Endothelial cell of umbilical vein (primary cell): ENCODE measurements at regions of chr17 and their contacts with region 1.

Region 1: DNA sequence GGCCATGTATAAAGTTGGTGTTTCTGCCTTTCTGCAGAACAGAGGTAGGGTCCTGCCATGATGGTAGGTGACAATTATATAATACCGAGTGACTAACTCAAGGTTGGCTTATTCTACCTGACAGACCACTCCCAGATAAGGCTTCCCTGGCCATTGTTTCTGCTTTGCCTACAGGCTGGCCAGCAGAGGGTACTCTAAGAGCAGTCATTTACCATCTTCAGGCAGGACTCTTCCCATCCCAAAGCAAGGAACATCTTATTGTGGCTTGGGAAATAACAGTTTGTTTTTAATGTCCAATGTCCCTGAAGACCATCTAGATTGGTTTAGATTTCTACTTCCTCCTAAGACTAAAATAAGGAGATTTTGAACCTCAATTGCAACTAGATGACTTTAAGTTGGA is 74.1 kb downstream of the SNX11 start:
- DNase-seq: peak; percentile 31
- H3K4me3 ChIP-seq: no peak overlapping the region
- H3K27ac ChIP-seq: no peak overlapping the region
- H3K4me1 ChIP-seq: no peaks in the 10 kb centered on the region
- H3K27me3 ChIP-seq: peaks cover 9 to 23% of the 10 kb centered on the region in 2 experiments
- CTCF ChIP-seq: peak; percentile 37 to 52
- POLR2A ChIP-seq: no peak

Region 2: GRCh38 chr17:48194097-48194550 is 12.5 kb after region 1 on chr17:
- CTCF ChIA-PET with region 1: interaction called, 11 read pairs
- POLR2A ChIA-PET with region 1: no interaction called
- dilution Hi-C with region 1: no loop called
- intact Hi-C with region 1: no loop called
- DNase-seq: peak; percentile 51
- H3K4me3 ChIP-seq: no peak overlapping the region
- H3K27ac ChIP-seq: peak overlapping the region; percentile 26
- H3K4me1 ChIP-seq: peaks cover 7% of the 10 kb centered on the region
- H3K27me3 ChIP-seq: peaks cover 0 to under 1% of the 10 kb centered on the region in 2 experiments
- CTCF ChIP-seq: no peak
- POLR2A ChIP-seq: no peak

Region 3: DNA sequence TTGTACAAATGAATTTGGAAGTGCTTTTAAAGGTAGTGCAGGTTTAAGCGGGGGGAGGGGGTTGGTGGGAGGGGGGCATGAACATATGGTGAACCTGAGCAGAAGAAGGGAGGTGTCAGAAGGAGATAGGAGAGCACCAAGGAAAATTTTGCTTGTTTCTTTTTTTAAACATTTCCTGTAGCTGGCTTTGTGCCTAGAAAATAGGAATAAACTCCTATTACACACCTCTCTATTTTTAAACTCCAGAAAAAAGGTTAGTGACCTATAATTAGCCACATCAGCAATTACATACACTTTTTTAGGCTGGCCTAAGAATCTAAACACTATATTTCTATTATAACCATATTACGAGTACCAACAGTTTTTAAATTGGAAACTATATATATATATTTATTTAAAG is 89.2 kb after region 1 on chr17:
- CTCF ChIA-PET with region 1: no interaction called
- POLR2A ChIA-PET with region 1: no interaction called
- dilution Hi-C with region 1: no loop called
- intact Hi-C with region 1: no loop called
- DNase-seq: no peak
- H3K4me3 ChIP-seq: no peak overlapping the region
- H3K27ac ChIP-seq: no peak overlapping the region
- H3K4me1 ChIP-seq: no peaks in the 10 kb centered on the region
- H3K27me3 ChIP-seq: no peaks in the 10 kb centered on the region
- CTCF ChIP-seq: no peak
- POLR2A ChIP-seq: no peak

Region 4: GRCh38 chr17:48344246-48344645 is 162.6 kb after region 1 on chr17:
- CTCF ChIA-PET with region 1: no interaction called
- POLR2A ChIA-PET with region 1: no interaction called
- dilution Hi-C with region 1: no loop called
- intact Hi-C with region 1: no loop called
- DNase-seq: no peak
- H3K4me3 ChIP-seq: no peak overlapping the region
- H3K27ac ChIP-seq: no peak overlapping the region
- H3K4me1 ChIP-seq: no peaks in the 10 kb centered on the region
- H3K27me3 ChIP-seq: peaks cover 0 to 4% of the 10 kb centered on the region in 2 experiments
- CTCF ChIP-seq: no peak
- POLR2A ChIP-seq: no peak